ENCODE measurements at regions of chr3 and their contacts with region 1.

Region 1: GRCh38 chr3:49153349-49153912 is 12.7 kb downstream of the CCDC71 start:
- DNase-seq: no peak
- H3K27ac ChIP-seq: no peak overlapping the region
- CTCF ChIP-seq: no peak

Region 2: DNA sequence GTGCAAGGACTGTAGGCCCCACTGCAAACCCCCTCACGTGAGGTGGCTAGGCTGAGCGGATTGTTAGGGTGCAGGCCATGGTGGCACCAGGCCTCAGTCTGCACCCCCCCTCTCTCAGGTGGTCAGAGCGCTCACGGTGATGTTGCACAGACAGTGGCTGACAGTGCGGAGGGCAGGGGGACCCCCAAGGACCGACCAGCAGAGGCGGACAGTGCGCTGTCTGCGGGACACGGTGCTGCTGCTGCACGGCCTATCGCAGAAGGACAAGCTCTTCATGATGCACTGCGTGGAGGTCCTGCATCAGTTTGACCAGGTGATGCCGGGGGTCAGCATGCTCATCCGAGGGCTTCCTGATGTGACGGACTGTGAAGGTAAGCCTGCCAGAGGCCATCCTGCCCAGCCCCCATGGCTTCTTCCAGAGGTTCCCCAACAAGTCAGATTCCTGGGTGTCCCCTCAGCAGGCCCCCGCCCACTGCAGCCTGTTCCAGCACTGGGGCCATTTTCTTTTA is 688.7 kb before region 1 on chr3:
- CTCF ChIA-PET with region 1: no interaction called
- POLR2A ChIA-PET with region 1: interaction called, 10 read pairs
- DNase-seq: no peak
- H3K27ac ChIP-seq: peak overlapping the region; percentile 100
- CTCF ChIP-seq: no peak

Region 3: DNA sequence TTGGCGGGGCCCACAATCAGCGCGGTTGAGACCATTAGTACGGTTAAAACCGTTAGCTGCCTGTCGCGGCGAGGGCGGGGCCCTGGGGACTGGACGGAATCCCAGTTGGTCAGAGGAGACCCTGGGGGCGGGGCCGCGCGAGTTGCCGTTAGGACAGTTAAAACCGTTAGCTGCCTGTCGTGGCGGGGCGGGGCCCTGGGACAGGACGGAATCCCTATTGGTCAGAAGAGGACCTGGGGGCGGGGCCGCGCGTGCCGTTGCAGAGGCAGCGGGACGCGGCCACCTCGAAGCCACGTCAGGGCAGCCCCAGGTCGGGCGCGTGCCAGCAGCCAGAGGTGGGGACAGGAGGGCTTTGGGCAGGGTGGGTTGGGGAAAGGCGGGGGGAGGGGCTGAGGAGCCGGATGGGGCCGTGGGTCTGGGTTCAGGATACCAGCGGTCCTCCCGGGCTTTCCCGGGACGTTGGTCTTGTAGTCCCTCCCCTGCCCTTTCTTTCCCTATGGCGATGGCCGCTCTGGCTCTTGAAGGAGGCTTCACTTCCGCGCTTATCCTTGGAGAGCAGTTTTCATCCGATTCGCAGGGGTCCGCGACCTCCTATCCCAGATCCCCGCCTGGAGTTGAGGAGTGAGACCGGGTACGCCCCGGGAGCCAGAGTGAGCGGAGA is 45.9 kb after region 1 on chr3:
- CTCF ChIA-PET with region 1: no interaction called
- POLR2A ChIA-PET with region 1: no interaction called
- DNase-seq: peak; percentile 30
- H3K27ac ChIP-seq: no peak overlapping the region
- CTCF ChIP-seq: no peak

Measured in RWPE1 (cell line).